ENCODE measurements at regions of chr13 and their contacts with region 1.

Region 1: DNA sequence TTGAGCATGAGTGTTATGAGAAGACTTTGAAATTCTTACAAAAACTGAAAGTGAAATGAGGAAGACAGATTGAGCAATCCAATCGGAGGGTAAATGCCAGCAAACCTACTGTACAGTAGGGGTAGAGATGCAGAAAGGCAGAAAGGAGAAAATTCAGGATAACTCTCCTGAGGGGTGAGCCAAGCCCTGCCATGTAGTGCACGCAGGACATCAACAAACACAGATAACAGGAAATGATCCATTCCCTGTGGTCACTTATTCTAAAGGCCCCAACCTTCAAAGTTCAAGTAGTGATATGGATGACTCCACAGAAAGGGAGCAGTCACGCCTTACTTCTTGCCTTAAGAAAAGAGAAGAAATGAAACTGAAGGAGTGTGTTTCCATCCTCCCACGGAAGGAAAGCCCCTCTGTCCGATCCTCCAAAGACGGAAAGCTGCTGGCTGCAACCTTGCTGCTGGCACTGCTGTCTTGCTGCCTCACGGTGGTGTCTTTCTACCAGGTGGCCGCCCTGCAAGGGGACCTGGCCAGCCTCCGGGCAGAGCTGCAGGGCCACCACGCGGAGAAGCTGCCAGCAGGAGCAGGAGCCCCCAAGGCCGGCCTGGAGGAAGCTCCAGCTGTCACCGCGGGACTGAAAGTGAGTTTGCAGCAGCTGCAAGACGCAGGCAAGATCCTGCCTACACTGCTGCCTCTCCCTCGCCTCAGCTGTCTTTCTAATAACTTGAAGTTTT is at the start of gene TNFSF13B:
- DNase-seq: peak in 8 of 9 donors; percentile 17 to 62 (median 26)
- ATAC-seq: peak; percentile 74
- H3K4me3 ChIP-seq: peak within 1 kb of the TSS; percentile 65
- H3K4me3 Mint-ChIP-seq: peak within 1 kb of the TSS; percentile 83 to 98 (median 90)
- H3K27ac ChIP-seq: peak within 1 kb of the TSS; percentile 66
- H3K27ac Mint-ChIP-seq: peak within 1 kb of the TSS; percentile 83 to 97 (median 92)
- H3K4me1 ChIP-seq: peaks cover 0 to 7% of the 10 kb centered on the region in 2 donors
- H3K4me1 Mint-ChIP-seq: peaks cover 23 to 68% (median 52%) of the 10 kb centered on the region in 7 donors
- H3K27me3 ChIP-seq: no peaks in the 10 kb centered on the region
- H3K27me3 Mint-ChIP-seq: no peaks in the 10 kb centered on the region
- total RNA-seq, gene TNFSF13B: 3.0 to 26.8 (median 12.8) TPM

Region 2: DNA sequence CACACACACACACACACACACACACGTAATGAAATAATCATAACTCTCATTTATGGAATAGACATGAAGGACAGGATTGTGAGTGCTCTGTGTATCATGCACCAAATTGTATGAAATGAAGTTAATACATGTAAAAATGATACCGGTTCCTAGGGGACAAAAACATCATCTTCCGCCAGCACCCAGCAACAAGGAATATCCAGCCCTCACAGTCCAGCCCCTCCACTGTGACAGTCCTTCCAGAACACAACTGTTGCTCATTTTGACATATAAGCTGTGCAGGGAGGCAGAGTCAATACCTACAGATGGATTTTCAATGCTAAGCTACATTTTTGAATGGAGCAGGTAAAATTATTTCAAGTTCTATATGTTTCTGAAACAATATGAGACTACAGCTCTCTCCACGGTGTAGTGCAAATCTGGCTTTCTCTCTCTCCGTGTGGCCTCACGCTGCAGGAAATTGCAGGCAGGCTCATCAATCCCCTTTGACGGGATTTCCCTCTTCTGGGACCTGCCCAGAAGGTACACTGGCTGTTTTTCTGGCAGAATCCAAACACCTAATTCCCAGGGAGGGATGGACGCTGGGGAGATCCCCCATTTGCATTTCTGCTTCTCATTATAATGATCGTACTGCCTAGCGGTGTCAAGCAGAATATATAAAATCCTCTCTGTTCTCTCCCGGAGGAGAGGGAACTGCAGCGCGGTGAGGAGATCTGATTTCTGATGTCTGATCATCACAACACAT is 548.5 kb before region 1 on chr13:
- CTCF ChIA-PET with region 1: no interaction called
- POLR2A ChIA-PET with region 1: no interaction called
- intact Hi-C with region 1: no loop called
- DNase-seq: no peak
- ATAC-seq: no peak
- H3K4me3 ChIP-seq: no peak overlapping the region
- H3K4me3 Mint-ChIP-seq: no peak overlapping the region
- H3K27ac ChIP-seq: no peak overlapping the region
- H3K27ac Mint-ChIP-seq: no peak overlapping the region
- H3K4me1 ChIP-seq: no peaks in the 10 kb centered on the region
- H3K4me1 Mint-ChIP-seq: no peaks in the 10 kb centered on the region
- H3K27me3 ChIP-seq: no peaks in the 10 kb centered on the region
- H3K27me3 Mint-ChIP-seq: peaks cover 0 to 6% (median 0%) of the 10 kb centered on the region in 5 donors

Region 3: GRCh38 chr13:108020027-108020426 is 249.7 kb before region 1 on chr13:
- CTCF ChIA-PET with region 1: no interaction called
- POLR2A ChIA-PET with region 1: no interaction called
- intact Hi-C with region 1: no loop called
- DNase-seq: no peak
- ATAC-seq: no peak
- H3K4me3 ChIP-seq: no peak overlapping the region
- H3K4me3 Mint-ChIP-seq: no peak overlapping the region
- H3K27ac ChIP-seq: no peak overlapping the region
- H3K27ac Mint-ChIP-seq: no peak overlapping the region
- H3K4me1 ChIP-seq: no peaks in the 10 kb centered on the region
- H3K4me1 Mint-ChIP-seq: no peaks in the 10 kb centered on the region
- H3K27me3 ChIP-seq: no peaks in the 10 kb centered on the region
- H3K27me3 Mint-ChIP-seq: no peaks in the 10 kb centered on the region

Region 4: GRCh38 chr13:108289819-108290218 is 20.1 kb after region 1 on chr13:
- CTCF ChIA-PET with region 1: no interaction called
- POLR2A ChIA-PET with region 1: no interaction called
- intact Hi-C with region 1: loop called in 1 of 2 experiments (anchors 2 kb)
- DNase-seq: no peak
- ATAC-seq: no peak
- H3K4me3 ChIP-seq: no peak overlapping the region
- H3K4me3 Mint-ChIP-seq: no peak overlapping the region
- H3K27ac ChIP-seq: no peak overlapping the region
- H3K27ac Mint-ChIP-seq: peak overlapping the region in 2 of 9 donors; percentile 2 to 39
- H3K4me1 ChIP-seq: no peaks in the 10 kb centered on the region
- H3K4me1 Mint-ChIP-seq: peaks cover 0 to 12% (median 0%) of the 10 kb centered on the region in 7 donors
- H3K27me3 ChIP-seq: no peaks in the 10 kb centered on the region
- H3K27me3 Mint-ChIP-seq: no peaks in the 10 kb centered on the region

Region 5: GRCh38 chr13:108305655-108306054 is 35.9 kb after region 1 on chr13:
- CTCF ChIA-PET with region 1: no interaction called
- POLR2A ChIA-PET with region 1: interaction called, 7 read pairs
- intact Hi-C with region 1: loop called (anchors 1 kb)
- DNase-seq: no peak
- ATAC-seq: no peak
- H3K4me3 ChIP-seq: no peak overlapping the region
- H3K4me3 Mint-ChIP-seq: peak overlapping the region in 1 of 10 donors; percentile 61
- H3K27ac ChIP-seq: no peak overlapping the region
- H3K27ac Mint-ChIP-seq: peak overlapping the region in 2 of 9 donors; percentile 37 to 39
- H3K4me1 ChIP-seq: peaks cover 0 to 8% of the 10 kb centered on the region in 2 donors
- H3K4me1 Mint-ChIP-seq: peaks cover 0 to 25% (median 14%) of the 10 kb centered on the region in 7 donors
- H3K27me3 ChIP-seq: no peaks in the 10 kb centered on the region
- H3K27me3 Mint-ChIP-seq: no peaks in the 10 kb centered on the region

Region 6: DNA sequence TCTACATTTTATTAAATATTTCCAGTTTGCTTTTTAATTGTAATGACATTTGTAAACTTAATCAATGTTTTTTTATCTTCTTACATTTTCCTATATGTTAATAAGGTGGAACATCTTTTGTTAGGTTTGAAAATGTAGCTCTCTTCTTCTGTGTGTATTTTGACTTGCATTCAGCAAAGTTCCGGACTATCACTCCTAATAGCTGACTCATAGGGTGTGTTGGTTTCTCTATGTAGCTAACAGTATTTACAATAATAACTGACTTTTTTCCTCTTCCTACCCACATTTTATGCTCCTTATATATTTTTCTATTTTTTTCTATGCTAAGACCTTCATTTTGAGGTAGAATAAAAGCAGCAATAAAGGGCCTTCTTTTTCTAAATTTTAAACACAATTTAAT is 387.8 kb after region 1 on chr13:
- CTCF ChIA-PET with region 1: no interaction called
- POLR2A ChIA-PET with region 1: no interaction called
- intact Hi-C with region 1: no loop called
- DNase-seq: no peak
- ATAC-seq: no peak
- H3K4me3 ChIP-seq: no peak overlapping the region
- H3K4me3 Mint-ChIP-seq: no peak overlapping the region
- H3K27ac ChIP-seq: no peak overlapping the region
- H3K27ac Mint-ChIP-seq: no peak overlapping the region
- H3K4me1 ChIP-seq: no peaks in the 10 kb centered on the region
- H3K4me1 Mint-ChIP-seq: no peaks in the 10 kb centered on the region
- H3K27me3 ChIP-seq: no peaks in the 10 kb centered on the region
- H3K27me3 Mint-ChIP-seq: peaks cover 0 to 5% (median 3%) of the 10 kb centered on the region in 5 donors

Measured in naive thymus-derived CD4-positive, alpha-beta T cell (primary cell).